Heart right ventricle (tissue), 16 donors: ENCODE measurements at regions of chr1 and their contacts with region 1.

Region 1: GRCh38 chr1:155050560-155051341 is at the start of gene ADAM15:
- DNase-seq: peak; percentile 82 to 88
- ATAC-seq: peak; percentile 73 to 91 (median 82)
- H3K4me3 ChIP-seq: peak within 1 kb of the TSS; percentile 51 to 98 (median 84)
- H3K27ac ChIP-seq: peak within 1 kb of the TSS; percentile 53 to 98 (median 94)
- H3K4me1 ChIP-seq: peaks cover 12 to 45% (median 27%) of the 10 kb centered on the region in 9 donors
- H3K27me3 ChIP-seq: no peaks in the 10 kb centered on the region
- CTCF ChIP-seq: peak; percentile 85 to 96 (median 92)
- total RNA-seq, gene ADAM15: 46.7 to 146 (median 58.5) TPM

Region 2: DNA sequence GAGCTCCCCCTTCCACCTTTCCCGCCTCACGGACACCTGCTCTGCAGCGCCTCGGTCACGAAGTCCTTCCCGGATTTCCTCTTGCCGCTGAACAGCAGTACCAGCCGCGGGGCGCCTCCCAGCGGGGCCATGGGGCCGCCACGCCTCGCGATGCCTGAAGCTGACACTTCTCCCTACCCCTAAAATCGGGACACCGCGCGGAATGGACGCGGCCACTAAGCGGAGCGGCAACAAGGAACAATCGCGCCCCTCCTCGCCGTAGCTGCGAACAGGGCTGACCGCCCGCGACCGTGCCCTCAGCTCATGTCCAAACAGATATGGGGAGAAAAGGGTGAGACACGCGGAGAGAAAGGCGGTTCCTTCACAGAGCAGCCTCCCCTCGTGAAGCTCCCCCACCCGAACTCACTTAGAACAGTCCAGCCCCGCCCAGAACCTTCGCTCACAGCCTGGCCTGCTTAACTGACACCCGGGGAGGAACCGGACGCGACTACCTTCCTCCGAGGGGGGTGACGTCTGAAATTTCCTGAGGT is 114.1 kb before region 1 on chr1 and contains the start of gene PMVK:
- intact Hi-C with region 1: no loop called
- DNase-seq: peak; percentile 92 to 98
- ATAC-seq: peak; percentile 92 to 97 (median 96)
- H3K4me3 ChIP-seq: peak within 1 kb of the TSS; percentile 44 to 70 (median 64)
- H3K27ac ChIP-seq: peak within 1 kb of the TSS; percentile 87 to 99 (median 96)
- H3K4me1 ChIP-seq: peaks cover 7 to 43% (median 25%) of the 10 kb centered on the region in 9 donors
- H3K27me3 ChIP-seq: no peaks in the 10 kb centered on the region
- CTCF ChIP-seq: peak in 8 of 9 donors; percentile 11 to 62 (median 36)
- total RNA-seq, gene PMVK: 29.9 to 66.4 (median 39.4) TPM

Region 3: GRCh38 chr1:154955718-154956543 is 94.8 kb before region 1 on chr1 and contains the start of gene PBXIP1:
- intact Hi-C with region 1: loop called in 1 of 10 experiments (anchors 5 kb)
- DNase-seq: peak in 1 of 2 donors; percentile 91
- ATAC-seq: peak; percentile 70 to 94 (median 88)
- H3K4me3 ChIP-seq: peak within 1 kb of the TSS; percentile 26 to 74 (median 60)
- H3K27ac ChIP-seq: peak within 1 kb of the TSS in 9 of 10 donors; percentile 69 to 84 (median 80)
- H3K4me1 ChIP-seq: peaks cover 15 to 68% (median 57%) of the 10 kb centered on the region in 9 donors
- H3K27me3 ChIP-seq: no peaks in the 10 kb centered on the region
- CTCF ChIP-seq: peak in 5 of 9 donors; percentile 21 to 47 (median 34)
- total RNA-seq, gene PBXIP1: 38.3 to 75.0 (median 48.8) TPM

Region 4: DNA sequence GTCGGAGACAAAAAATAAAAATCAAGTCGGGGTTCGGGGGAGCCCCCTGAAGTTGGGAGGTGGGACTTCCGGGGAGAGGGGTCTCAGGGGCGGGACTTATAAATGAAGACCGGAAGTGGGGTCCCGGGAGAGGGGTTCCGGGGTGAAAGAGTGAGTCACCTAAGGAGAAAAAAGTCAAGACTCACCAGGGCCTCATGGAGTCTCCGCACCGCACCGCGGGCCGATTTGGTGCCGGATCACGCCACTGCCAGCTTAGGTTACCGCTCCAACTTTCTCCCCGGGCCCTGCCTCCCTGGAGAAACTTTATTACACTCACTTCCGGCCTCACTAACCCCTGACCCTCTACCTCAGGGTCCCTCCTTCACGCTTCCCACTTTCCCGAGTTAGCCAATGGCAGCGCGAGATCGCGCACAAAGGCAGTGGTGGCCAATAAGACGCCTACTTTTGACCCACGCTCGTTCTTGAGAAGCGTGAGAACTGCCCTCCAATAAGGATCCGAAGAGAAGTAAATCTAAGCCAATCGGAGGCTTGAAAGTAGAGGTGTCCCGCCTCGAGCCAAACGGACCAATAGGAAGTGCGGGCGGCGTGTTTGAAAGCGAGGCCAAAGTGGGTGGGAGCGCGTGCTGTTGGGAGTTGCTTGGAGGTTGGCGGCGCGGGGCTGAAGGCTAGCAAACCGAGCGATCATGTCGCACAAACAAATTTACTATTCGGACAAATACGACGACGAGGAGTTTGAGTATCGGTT is 76.5 kb before region 1 on chr1 and contains the start of gene CKS1B:
- intact Hi-C with region 1: loop called in 2 of 10 experiments (anchors 5 to 10 kb)
- DNase-seq: peak; percentile 95 to 98
- ATAC-seq: peak; percentile 82 to 92 (median 89)
- H3K4me3 ChIP-seq: peak within 1 kb of the TSS; percentile 41 to 89 (median 66)
- H3K27ac ChIP-seq: peak within 1 kb of the TSS; percentile 90 to 100 (median 96)
- H3K4me1 ChIP-seq: peaks cover 25 to 64% (median 50%) of the 10 kb centered on the region in 9 donors
- H3K27me3 ChIP-seq: no peaks in the 10 kb centered on the region
- CTCF ChIP-seq: peak in 1 of 9 donors; percentile 18
- total RNA-seq, gene CKS1B: 10.9 to 30.9 (median 17.5) TPM

Region 5: GRCh38 chr1:155172732-155173477 is 122.2 kb after region 1 on chr1 and contains the start of gene KRTCAP2:
- intact Hi-C with region 1: no loop called
- DNase-seq: peak; percentile 94 to 96
- ATAC-seq: peak; percentile 85 to 92 (median 90)
- H3K4me3 ChIP-seq: peak within 1 kb of the TSS; percentile 63 to 95 (median 78)
- H3K27ac ChIP-seq: peak within 1 kb of the TSS; percentile 72 to 98 (median 94)
- H3K4me1 ChIP-seq: peaks cover 5 to 47% (median 24%) of the 10 kb centered on the region in 9 donors
- H3K27me3 ChIP-seq: peaks cover 7 to 28% (median 19%) of the 10 kb centered on the region in 7 donors
- CTCF ChIP-seq: peak; percentile 93 to 98 (median 95)
- total RNA-seq, gene KRTCAP2: 96.1 to 173 (median 114) TPM